Vagina (tissue), 2 donors: ENCODE measurements at regions of chrX and their contacts with region 1.

Region 1: GRCh38 chrX:154515878-154516655 is at the start of gene FAM3A:
- DNase-seq: no peak
- H3K4me3 ChIP-seq: peak within 1 kb of the TSS; percentile 50 to 62
- H3K27ac ChIP-seq: peak within 1 kb of the TSS; percentile 82
- H3K4me1 ChIP-seq: no peaks in the 10 kb centered on the region
- H3K27me3 ChIP-seq: no peaks in the 10 kb centered on the region
- CTCF ChIP-seq: no peak
- POLR2A ChIP-seq: peak in 1 of 2 donors; percentile 87
- total RNA-seq, gene FAM3A: 59.9 TPM

Region 2: GRCh38 chrX:154478728-154479622 is 37.1 kb before region 1 on chrX and contains the start of gene LAGE3:
- intact Hi-C with region 1: loop called (anchors 5 kb)
- DNase-seq: no peak
- H3K4me3 ChIP-seq: peak within 1 kb of the TSS; percentile 49 to 52
- H3K27ac ChIP-seq: peak within 1 kb of the TSS; percentile 72
- H3K4me1 ChIP-seq: peaks cover 5% of the 10 kb centered on the region
- H3K27me3 ChIP-seq: no peaks in the 10 kb centered on the region
- CTCF ChIP-seq: no peak
- POLR2A ChIP-seq: peak in 1 of 2 donors; percentile 28
- total RNA-seq, gene LAGE3: 27.7 TPM